Spleen (tissue), 13 donors: ENCODE measurements at regions of chr9 and their contacts with region 1.

Region 1: GRCh38 chr9:98315551-98316060 is 60.2 kb upstream of the TBC1D2 start:
- DNase-seq: peak; percentile 89
- H3K4me3 ChIP-seq: no peak overlapping the region
- H3K27ac ChIP-seq: no peak overlapping the region
- H3K4me1 ChIP-seq: peaks cover 0 to 10% (median 4%) of the 10 kb centered on the region in 6 donors
- H3K27me3 ChIP-seq: peaks cover 0 to 19% (median 0%) of the 10 kb centered on the region in 7 donors
- CTCF ChIP-seq: peak; percentile 63 to 91 (median 83)
- POLR2A ChIP-seq: no peak

Region 2: DNA sequence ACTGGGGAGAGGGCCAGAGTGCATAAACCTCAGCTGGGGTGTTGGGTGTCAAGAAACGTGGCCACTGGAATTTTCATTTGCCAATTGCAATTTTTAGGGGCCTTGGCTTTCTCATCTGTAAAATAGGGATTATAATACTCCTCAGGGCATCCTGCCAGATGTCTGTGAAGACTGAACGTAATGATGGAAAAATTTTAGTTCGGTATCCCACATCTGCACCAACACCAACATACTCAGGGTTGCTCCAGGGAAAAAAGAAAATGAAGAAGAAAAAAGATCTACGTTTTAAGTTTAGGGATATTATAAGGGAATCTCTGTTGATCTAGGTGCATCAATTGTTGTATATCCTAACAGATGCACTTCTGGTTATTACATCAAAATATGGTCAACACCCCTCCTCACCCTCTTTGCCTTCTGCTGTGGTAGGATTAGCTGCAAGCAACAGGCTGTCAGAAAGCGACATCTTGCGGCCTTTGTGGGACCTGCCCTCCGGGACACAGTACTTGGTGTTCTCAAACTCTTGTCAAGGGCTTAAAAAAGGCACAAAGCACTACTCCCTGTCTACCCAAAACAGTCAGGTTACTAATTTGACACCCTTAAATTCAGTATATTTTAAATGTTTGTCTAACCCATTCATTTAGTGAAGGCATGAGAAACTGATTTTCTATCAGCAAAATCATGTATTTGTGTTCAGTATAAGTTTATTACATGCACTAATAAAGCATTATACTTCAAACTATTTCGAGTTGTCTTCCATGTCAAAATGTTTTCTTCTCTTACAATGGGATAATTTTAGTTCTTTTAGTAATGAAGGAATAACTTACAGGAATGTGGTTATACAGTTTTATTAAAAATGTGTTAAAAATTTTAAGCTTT is 51.9 kb before region 1 on chr9:
- intact Hi-C with region 1: no loop called
- DNase-seq: peak; percentile 94
- H3K4me3 ChIP-seq: no peak overlapping the region
- H3K27ac ChIP-seq: no peak overlapping the region
- H3K4me1 ChIP-seq: no peaks in the 10 kb centered on the region
- H3K27me3 ChIP-seq: no peaks in the 10 kb centered on the region
- CTCF ChIP-seq: peak; percentile 66 to 94 (median 89)
- POLR2A ChIP-seq: no peak

Region 3: GRCh38 chr9:98775831-98776441 is 460.3 kb after region 1 on chr9:
- intact Hi-C with region 1: loop called (anchors 2 kb)
- DNase-seq: no peak
- H3K4me3 ChIP-seq: no peak overlapping the region
- H3K27ac ChIP-seq: no peak overlapping the region
- H3K4me1 ChIP-seq: no peaks in the 10 kb centered on the region
- H3K27me3 ChIP-seq: no peaks in the 10 kb centered on the region
- CTCF ChIP-seq: peak; percentile 24 to 79 (median 58)
- POLR2A ChIP-seq: no peak